Dorsolateral prefrontal cortex (tissue), 120 donors: ENCODE measurements at regions of chr14 and their contacts with region 1.

Region 1: DNA sequence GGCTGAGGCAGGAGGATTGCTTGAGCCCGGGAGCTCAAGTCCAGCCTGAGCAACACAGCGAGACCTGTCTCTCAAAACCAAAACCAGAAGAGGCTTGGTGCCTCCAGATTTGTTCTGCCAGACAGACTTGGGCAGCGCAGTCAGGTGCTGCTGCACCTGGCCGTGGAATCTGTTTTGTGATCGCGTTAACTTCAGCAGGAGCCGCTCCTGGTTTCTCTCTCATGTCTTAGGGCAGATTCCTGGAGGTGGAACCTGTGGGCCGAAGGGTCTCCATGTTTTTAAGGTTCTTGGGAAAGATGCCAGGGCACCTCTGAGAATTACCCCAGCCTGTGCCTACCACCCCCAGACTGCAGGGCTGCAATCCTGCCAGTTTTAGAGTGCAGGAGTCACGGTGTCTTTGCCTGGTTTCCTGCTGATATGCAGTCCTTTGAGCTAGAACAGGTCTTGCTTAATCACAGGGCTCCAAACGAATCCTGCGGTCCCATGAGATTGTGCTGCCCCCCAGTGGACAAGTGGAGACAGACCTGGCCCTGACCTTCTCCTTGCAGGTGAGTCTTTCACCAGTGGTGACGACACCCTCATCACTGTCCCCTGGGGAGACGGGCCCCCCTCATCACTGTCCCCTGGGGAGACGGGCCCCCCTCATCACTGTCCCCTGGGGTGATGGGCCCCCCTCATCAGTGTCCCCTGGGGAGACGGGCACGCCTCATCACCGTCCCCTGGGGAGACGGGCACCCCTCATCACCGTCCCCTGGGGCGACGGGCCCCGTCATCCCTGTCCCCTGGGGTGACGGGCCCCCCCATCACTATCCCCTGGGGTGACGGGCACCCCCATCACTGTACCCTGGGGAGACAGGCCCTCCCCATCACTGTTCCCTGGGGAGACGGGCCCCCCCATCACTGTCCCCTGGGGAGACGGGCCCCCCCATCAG is 37.6 kb downstream of the PACS2 start:
- DNase-seq: peak; percentile 75 to 90 (median 85)
- H3K4me3 ChIP-seq: peak overlapping the region in 1 of 59 donors; percentile 6
- H3K27ac ChIP-seq: peak overlapping the region in 47 of 59 donors; percentile 3 to 80 (median 53)
- H3K27me3 ChIP-seq: no peaks in the 10 kb centered on the region
- CTCF ChIP-seq: peak; percentile 51 to 94 (median 87)

Region 2: GRCh38 chr14:104768437-104769323 is 583.5 kb before region 1 on chr14:
- intact Hi-C with region 1: no loop called
- DNase-seq: peak; percentile 85 to 95 (median 92)
- H3K4me3 ChIP-seq: no peak overlapping the region
- H3K27ac ChIP-seq: peak overlapping the region in 17 of 59 donors; percentile 1 to 87 (median 21)
- H3K27me3 ChIP-seq: no peaks in the 10 kb centered on the region
- CTCF ChIP-seq: peak; percentile 74 to 99 (median 97)

Region 3: DNA sequence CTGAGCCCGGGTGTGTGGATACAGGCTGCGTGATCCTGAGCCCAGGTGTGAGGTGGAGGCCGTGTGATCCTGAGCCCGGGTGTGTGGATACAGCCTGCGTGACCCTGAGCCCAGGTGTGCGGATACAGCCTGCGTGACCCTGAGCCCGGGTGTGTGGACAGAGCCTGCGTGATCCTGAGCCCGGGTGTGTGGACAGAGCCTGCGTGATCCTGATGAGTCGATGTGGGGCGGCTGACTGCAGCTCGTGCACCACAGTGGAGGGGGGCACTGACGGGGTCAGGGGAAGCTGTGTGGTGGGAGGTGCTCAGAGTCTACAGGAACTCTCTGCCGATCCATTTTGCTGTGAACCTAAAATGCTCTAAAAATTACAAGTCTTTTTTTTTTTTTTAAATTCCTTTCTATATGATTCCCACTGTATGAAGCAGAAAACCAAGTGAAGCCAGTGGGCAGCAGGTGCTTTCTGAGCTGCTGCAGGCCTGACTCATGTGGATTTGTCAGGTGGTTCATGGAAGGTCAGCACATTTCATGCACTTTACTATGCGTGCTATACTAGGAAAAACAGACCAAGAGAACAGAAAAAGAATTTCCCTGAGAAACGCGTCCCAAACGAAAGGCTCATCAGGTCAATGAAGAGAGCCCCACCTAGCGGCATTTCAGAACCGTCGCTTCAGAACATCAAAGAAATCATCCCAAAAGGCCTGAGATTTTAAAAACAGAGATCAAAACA is 70.7 kb before region 1 on chr14:
- intact Hi-C with region 1: loop called in 1 of 2 experiments (anchors 5 kb)
- DNase-seq: peak in 3 of 10 donors; percentile 26 to 61 (median 51)
- H3K4me3 ChIP-seq: no peak overlapping the region
- H3K27ac ChIP-seq: peak overlapping the region in 15 of 59 donors; percentile 4 to 77 (median 25)
- H3K27me3 ChIP-seq: no peaks in the 10 kb centered on the region
- CTCF ChIP-seq: peak; percentile 55 to 83 (median 73)